ENCODE measurements at regions of chr7 and their contacts with region 1.

Region 1: DNA sequence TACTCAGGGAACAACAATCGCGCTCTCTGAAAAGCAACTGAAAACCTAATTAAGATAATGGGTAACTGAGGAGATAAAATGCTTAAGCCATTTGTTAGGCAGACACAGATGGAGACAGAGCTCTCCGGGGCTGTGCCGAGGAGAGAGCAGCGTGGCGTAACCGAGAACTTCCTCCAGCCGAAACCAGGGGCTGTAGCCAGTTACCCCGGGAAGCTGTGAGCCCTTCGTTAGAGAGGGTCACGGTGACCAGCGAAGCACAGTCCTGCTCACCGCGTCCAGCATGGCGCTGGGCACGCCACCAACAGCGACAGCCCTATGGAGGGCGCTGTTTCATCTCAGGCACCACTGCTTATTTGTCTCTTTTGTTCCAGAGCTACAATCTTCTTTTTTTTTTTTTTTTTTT is 16.1 kb downstream of the PAPOLB start:
- DNase-seq: peak in 8 of 10 donors; percentile 43 to 92 (median 58)

Region 2: GRCh38 chr7:4883374-4884144 is 37.8 kb after region 1 on chr7 and contains the start of gene RADIL:
- intact Hi-C with region 1: loop called (anchors 2 kb)
- DNase-seq: peak; percentile 86 to 99 (median 94)

Region 3: DNA sequence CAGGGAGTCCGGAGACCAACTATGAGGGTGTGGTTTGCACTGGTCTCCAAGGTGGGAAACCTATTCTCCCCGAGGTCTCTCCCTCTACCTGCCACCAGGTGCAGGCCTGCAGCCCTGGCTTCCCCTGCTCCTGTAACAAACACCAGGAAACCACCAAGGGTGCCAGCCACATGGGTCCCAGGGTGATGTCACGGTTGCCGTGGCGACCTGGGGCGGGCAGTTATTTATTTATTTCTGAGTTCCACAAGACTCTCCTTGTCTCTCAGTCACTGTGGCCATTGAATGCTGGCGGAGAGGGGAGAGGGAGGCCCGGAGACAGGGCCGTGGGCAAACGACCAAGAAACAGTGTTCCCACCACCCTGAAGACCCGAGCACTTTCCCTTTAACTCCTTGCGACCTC is 86.2 kb after region 1 on chr7:
- intact Hi-C with region 1: no loop called
- DNase-seq: peak; percentile 73 to 96 (median 83)

Region 4: DNA sequence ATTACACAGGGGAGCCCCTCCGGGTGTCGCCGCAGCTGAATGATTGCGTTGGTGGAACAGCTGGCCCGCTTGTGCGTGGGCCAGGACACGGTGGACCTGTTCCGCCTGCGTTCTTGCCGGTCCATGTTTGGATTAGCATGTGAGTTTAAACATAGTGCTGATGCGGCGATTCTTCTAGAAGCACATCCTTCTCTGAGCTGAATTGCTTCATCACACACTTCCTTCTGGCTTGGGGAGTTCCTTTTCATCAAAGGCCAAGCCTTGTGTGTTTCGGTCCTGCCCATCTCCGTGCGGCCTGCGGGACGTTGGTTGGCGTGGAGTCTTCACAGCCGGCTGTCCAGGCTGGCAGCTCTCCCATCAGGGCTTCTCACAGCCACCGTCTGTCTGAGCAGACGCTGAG is 391.5 kb after region 1 on chr7:
- intact Hi-C with region 1: no loop called
- DNase-seq: peak; percentile 44 to 95 (median 68)

Measured in posterior cingulate gyrus (tissue), 11 donors.